Endothelial cell of umbilical vein (primary cell): ENCODE measurements at regions of chr9 and their contacts with region 1.

Region 1: DNA sequence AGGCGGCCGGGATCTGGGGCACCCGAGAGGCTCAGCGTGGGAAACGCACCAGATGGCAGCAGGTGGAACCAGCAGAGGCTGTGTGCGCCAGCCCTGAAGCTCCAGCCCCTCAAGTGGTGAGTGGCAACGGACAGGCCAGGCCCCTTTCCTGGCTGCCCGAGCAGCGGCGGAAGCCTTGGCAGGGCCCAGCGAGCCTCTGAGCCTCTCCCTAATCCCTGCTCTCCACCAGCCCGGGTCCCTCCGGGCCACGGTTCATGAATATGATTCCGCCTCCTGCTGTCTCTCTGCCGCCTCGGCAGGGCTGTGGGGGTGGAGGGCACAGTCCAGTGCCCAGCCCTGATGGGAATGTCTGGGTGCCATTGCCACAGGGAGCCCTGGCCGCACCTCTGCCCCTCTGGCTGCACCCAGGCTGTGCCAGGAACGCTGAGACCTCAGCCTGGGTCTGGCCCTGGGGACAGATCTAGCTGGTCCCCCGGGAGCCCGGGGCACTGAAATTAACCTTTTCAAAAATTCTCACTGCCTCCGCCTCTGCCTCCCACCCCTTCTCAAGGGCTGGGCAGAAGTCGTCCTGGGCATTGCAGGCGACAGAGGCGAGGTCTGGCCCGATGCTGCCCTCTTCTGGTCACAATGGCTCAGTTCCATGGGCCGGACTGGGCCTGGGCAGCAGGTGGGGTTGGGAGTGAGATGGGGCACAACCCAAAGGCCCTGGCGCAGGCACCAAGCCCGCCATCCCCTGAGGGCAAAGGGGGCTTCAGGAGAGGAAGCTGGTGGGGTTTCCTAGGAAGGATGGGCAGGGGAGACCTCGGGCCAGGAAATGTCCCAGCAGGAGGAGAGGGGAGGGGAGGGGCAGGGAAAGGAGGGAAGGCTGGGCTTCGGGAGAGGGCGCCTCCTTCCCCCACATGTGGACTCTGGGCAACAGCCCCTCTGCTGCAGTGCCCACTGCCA is 20.3 kb downstream of the CCDC187 start:
- DNase-seq: peak; percentile 75
- H3K4me3 ChIP-seq: no peak overlapping the region
- H3K27ac ChIP-seq: no peak overlapping the region
- H3K4me1 ChIP-seq: no peaks in the 10 kb centered on the region
- H3K27me3 ChIP-seq: peaks cover 0 to 2% of the 10 kb centered on the region in 2 experiments
- CTCF ChIP-seq: peak; percentile 83 to 92
- POLR2A ChIP-seq: no peak

Region 2: DNA sequence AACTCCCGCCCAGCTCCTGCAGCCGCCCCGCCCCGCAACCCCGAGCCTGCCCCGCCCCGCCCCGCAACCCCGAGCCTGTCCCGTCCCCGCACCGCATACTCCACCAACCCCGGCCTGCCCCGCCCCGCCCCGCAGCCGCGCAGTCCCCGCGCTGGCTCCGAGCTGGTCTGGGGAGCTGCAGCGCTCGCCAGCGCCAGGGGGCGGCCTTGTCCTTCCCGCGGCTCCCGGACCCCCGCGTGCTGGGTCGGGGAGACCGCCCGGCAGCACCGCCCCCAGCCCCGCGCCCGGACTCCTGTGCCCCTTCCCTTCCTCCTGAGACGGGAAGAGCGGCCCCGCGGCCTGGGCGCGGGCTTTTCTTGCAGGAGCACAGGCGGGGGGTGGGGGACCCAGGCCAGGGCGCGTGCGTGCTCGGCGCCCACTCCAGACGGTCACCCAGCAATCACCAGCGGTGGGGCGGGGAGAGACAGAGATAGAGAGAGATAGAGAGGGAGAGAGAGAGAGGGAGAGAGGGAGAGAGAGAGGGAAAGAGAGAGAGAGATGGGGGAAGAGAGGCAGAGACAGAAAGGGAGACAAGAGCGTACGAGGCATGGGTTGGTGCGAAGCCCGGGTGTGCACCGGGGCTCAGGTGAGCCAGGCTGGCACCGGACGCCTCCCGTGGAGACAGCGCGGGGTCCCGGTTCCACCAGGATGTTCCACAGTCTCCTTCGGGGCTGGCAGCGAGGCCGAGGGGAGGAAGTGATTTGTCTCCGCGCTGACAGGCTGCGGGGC is 150.2 kb before region 1 on chr9:
- CTCF ChIA-PET with region 1: interaction called, 24 read pairs
- POLR2A ChIA-PET with region 1: no interaction called
- dilution Hi-C with region 1: no loop called
- intact Hi-C with region 1: loop called (anchors 1 kb)
- DNase-seq: no peak
- H3K4me3 ChIP-seq: peak overlapping the region in 1 of 3 experiments; percentile 35
- H3K27ac ChIP-seq: no peak overlapping the region
- H3K4me1 ChIP-seq: peaks cover 4% of the 10 kb centered on the region
- H3K27me3 ChIP-seq: peaks cover 26 to 30% of the 10 kb centered on the region in 2 experiments
- CTCF ChIP-seq: peak; percentile 39 to 68
- POLR2A ChIP-seq: no peak

Region 3: GRCh38 chr9:136143216-136144001 is 140.2 kb before region 1 on chr9:
- CTCF ChIA-PET with region 1: interaction called, 8 read pairs
- POLR2A ChIA-PET with region 1: no interaction called
- dilution Hi-C with region 1: no loop called
- intact Hi-C with region 1: loop called (anchors 1 kb)
- DNase-seq: peak; percentile 57
- H3K4me3 ChIP-seq: no peak overlapping the region
- H3K27ac ChIP-seq: no peak overlapping the region
- H3K4me1 ChIP-seq: no peaks in the 10 kb centered on the region
- H3K27me3 ChIP-seq: peaks cover 1 to 2% of the 10 kb centered on the region in 2 experiments
- CTCF ChIP-seq: peak; percentile 45 to 73
- POLR2A ChIP-seq: no peak

Region 4: DNA sequence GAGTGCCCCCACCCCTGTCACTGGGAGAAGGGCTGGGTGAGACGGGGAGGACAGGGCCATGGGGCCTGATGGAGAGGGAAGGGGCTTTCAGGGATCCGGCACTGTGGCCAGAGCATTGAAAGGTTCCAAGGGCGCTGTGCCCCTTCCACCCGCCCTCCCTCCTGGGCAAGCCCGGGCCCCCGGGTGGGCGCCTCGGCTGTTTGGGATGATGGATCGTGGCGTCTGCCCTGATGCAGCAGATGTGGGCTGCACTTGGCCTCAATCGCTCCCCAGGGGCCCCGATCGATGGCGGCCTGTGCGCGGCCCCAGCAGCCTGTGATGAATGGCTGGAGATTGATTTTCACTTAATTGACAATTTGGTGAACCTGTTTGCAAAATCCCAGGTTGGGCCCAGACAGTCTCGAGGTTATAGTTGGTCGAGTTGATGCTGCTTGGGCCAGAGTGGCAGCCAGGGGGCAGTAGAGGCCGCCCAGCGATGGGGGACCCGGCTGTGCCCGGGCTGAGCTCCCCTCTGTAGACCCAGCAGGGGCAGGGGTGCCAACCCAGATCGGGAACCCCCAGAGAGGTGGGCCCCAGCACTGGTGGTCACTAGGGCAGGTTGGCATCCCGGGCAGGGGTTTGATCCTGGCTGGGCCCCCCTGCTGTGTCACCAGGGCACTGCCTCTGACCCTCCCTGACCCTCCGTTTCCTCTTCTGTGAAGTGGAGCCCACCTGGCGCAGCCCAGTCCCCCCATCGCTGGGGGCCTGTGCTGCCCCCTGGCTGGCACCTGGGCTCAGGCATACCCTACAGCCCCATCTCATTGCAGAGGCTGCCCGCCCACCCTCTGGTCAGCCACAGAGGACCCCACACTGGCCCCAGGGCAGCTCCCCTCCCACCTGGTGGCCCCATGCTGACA is 113.3 kb before region 1 on chr9:
- CTCF ChIA-PET with region 1: interaction called, 16 read pairs
- POLR2A ChIA-PET with region 1: no interaction called
- dilution Hi-C with region 1: no loop called
- intact Hi-C with region 1: no loop called
- DNase-seq: no peak
- H3K4me3 ChIP-seq: no peak overlapping the region
- H3K27ac ChIP-seq: no peak overlapping the region
- H3K4me1 ChIP-seq: no peaks in the 10 kb centered on the region
- H3K27me3 ChIP-seq: peaks cover 4% of the 10 kb centered on the region in 2 experiments
- CTCF ChIP-seq: peak; percentile 73 to 83
- POLR2A ChIP-seq: no peak

Region 5: DNA sequence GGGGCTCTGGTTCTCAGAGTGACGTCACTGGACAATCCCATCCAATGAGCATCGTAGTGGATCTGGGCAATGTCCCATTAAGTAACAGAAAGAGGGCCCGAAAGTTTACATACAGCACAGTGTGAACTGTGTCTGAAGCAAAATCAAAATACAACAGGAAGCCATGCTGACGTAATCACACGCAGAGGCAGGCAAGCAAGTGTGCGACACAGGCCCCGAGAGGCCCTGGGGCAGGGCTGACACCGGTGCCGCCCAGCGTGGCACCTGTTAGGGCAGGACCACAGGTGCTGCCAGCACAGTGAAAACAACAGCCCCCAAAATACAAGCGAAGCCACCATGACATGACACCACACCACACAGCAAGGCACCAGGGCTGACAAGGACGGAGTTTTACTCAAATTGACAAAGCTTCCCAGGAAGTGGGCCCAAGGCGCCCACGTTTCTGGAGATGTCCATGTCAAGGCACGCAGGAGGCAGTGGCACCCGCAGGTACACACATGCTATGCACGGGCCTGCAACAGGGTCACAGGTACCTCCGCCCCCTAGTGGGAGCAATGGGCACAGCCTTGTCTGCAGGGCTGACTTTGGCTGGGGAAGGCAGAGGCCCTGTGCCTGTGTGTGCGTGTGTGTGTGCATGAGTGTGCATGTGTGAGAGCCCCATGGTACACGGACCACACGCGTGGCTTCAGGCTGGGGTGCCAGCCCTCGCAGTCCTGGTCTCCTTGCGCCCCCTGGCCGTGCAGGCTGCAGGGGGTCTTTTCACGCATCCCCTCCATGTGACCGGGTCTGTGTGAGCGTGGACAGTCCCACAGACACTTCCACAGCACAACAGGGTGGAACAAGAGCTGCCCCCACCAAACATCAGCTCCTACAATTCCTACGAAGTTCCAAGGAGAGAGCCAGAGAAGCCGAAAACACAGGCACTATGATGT is 57.5 kb before region 1 on chr9:
- CTCF ChIA-PET with region 1: interaction called, 3 read pairs
- POLR2A ChIA-PET with region 1: no interaction called
- dilution Hi-C with region 1: no loop called
- intact Hi-C with region 1: loop called (anchors 1 kb)
- DNase-seq: peak; percentile 42
- H3K4me3 ChIP-seq: no peak overlapping the region
- H3K27ac ChIP-seq: no peak overlapping the region
- H3K4me1 ChIP-seq: peaks cover 7% of the 10 kb centered on the region
- H3K27me3 ChIP-seq: no peaks in the 10 kb centered on the region
- CTCF ChIP-seq: peak; percentile 82 to 96
- POLR2A ChIP-seq: no peak